Panc1 (cell line): ENCODE measurements at regions of chr13 and their contacts with region 1.

Region 1: DNA sequence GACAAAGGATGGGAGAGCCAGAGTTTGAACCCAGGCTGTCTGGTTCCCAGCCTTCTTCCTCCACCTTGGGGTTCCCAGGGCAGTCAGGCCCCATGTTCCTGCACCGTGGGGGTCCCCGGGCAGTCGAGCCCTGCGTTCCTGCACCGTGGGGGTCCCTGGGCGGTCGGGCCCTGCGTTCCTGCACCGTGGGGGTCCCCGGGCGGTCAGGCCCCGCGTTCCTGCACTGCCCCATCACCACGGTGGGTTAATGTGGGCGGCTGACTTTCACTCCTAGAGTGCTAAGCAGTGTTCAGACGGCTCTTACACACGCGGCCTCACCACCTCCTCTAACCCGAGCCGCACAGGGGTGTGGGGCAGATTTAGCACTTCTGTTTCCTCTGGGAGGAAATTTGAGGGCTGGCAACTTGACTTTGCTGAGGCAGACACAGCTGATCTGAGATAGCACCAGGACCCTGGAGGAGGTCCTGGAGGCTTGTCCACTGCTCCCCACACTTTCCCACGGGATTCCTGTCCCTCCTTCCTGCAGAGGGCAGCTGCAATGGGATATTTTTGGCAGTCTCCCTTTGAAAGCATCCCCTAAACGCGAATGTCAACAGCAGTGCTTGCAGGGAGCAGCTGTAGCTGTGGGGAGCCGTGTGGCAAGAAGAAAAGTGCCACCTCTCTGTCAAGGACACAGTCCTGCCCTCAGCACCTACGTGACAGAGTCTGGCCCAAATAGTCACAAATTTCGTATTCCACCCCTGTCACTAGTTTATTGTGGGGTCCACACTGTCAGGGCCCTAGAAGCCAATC is 239.4 kb downstream of the TEX29 start:
- DNase-seq: no peak
- ATAC-seq: no peak
- H3K4me3 ChIP-seq: no peak overlapping the region
- H3K27ac ChIP-seq: no peak overlapping the region
- H3K4me1 ChIP-seq: no peaks in the 10 kb centered on the region
- H3K27me3 ChIP-seq: no peaks in the 10 kb centered on the region
- CTCF ChIP-seq: no peak

Region 2: GRCh38 chr13:111099290-111099689 is 460.5 kb before region 1 on chr13:
- CTCF ChIA-PET with region 1: no interaction called
- POLR2A ChIA-PET with region 1: no interaction called
- in situ Hi-C with region 1: no loop called
- intact Hi-C with region 1: no loop called
- DNase-seq: no peak
- ATAC-seq: no peak
- H3K4me3 ChIP-seq: no peak overlapping the region
- H3K27ac ChIP-seq: no peak overlapping the region
- H3K4me1 ChIP-seq: no peaks in the 10 kb centered on the region
- H3K27me3 ChIP-seq: peaks cover 5% of the 10 kb centered on the region; the same call in 1 of the 2 replicates
- CTCF ChIP-seq: no peak

Region 3: DNA sequence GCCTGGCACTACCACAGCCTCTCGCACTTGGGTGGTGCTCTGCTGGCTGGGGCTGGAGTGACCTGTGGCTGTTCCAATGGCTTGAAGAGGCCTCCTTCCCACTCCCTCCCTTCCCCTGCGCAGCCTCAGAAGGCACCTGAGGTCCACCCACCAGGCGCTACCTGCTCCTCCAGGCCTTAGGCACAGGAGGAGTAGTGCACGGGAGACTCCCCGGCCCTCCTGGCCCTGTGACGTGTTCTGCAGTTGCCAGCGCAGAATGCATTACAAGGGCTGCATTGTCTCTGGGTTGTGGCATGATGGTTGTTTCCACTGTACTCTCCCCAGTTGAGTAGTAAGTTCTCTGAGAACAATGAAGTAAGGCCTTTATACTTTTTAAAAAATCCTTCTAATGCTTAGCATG is 110.8 kb before region 1 on chr13:
- CTCF ChIA-PET with region 1: no interaction called
- POLR2A ChIA-PET with region 1: no interaction called
- in situ Hi-C with region 1: no loop called
- intact Hi-C with region 1: no loop called
- DNase-seq: no peak
- ATAC-seq: no peak
- H3K4me3 ChIP-seq: no peak overlapping the region
- H3K27ac ChIP-seq: no peak overlapping the region
- H3K4me1 ChIP-seq: no peaks in the 10 kb centered on the region
- H3K27me3 ChIP-seq: no peaks in the 10 kb centered on the region; the same call in 1 of the 2 replicates
- CTCF ChIP-seq: no peak

Region 4: DNA sequence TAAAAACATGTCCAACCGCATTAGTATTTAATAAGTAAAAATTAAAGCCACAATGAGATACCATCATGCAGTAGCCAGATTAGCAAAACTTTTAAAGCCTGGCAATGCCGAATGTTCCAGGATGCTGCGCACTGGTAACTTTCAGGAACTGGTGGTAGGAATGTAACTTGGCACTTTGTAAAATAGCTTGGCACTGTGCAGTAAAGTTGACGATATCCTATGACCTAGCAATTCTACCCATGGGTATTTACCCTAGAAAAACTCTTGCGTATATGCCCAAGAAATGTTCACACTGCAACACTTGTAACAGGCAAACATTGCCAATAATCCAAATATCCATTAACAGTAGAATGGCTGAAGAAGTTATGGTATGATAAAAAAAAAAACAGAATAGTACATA is 914.0 kb after region 1 on chr13:
- CTCF ChIA-PET with region 1: interaction called, 10 read pairs
- POLR2A ChIA-PET with region 1: no interaction called
- in situ Hi-C with region 1: no loop called
- intact Hi-C with region 1: no loop called
- DNase-seq: no peak
- ATAC-seq: no peak
- H3K4me3 ChIP-seq: no peak overlapping the region
- H3K27ac ChIP-seq: no peak overlapping the region
- H3K4me1 ChIP-seq: no peaks in the 10 kb centered on the region
- H3K27me3 ChIP-seq: no peaks in the 10 kb centered on the region
- CTCF ChIP-seq: no peak